ENCODE measurements at regions of chr20 and their contacts with region 1.

Region 1: GRCh38 chr20:37384683-37385174 is 38.8 kb downstream of the SRC start:
- DNase-seq: peak; percentile 85
- ATAC-seq: peak; percentile 71
- H3K4me3 ChIP-seq: peak overlapping the region in 4 of 5 experiments; percentile 49 to 65 (median 57)
- H3K4me3 Mint-ChIP-seq: peak overlapping the region; percentile 92
- H3K27ac ChIP-seq: peak overlapping the region in 1 of 2 donors; percentile 59
- H3K27ac Mint-ChIP-seq: peak overlapping the region; percentile 90
- H3K4me1 ChIP-seq: peaks cover 10 to 42% of the 10 kb centered on the region in 2 donors
- H3K4me1 Mint-ChIP-seq: peaks cover 39% of the 10 kb centered on the region
- H3K27me3 ChIP-seq: no peaks in the 10 kb centered on the region
- H3K27me3 Mint-ChIP-seq: no peaks in the 10 kb centered on the region
- CTCF ChIP-seq: peak; percentile 90

Region 2: GRCh38 chr20:37202267-37202943 is 182.3 kb before region 1 on chr20:
- CTCF ChIA-PET with region 1: interaction called, 6 read pairs
- POLR2A ChIA-PET with region 1: no interaction called
- intact Hi-C with region 1: loop called (anchors 2 kb)
- DNase-seq: peak; percentile 56
- ATAC-seq: peak; percentile 58
- H3K4me3 ChIP-seq: no peak overlapping the region
- H3K4me3 Mint-ChIP-seq: no peak overlapping the region
- H3K27ac ChIP-seq: no peak overlapping the region
- H3K27ac Mint-ChIP-seq: no peak overlapping the region
- H3K4me1 ChIP-seq: no peaks in the 10 kb centered on the region
- H3K4me1 Mint-ChIP-seq: no peaks in the 10 kb centered on the region
- H3K27me3 ChIP-seq: no peaks in the 10 kb centered on the region
- H3K27me3 Mint-ChIP-seq: no peaks in the 10 kb centered on the region
- CTCF ChIP-seq: peak; percentile 85

Region 3: DNA sequence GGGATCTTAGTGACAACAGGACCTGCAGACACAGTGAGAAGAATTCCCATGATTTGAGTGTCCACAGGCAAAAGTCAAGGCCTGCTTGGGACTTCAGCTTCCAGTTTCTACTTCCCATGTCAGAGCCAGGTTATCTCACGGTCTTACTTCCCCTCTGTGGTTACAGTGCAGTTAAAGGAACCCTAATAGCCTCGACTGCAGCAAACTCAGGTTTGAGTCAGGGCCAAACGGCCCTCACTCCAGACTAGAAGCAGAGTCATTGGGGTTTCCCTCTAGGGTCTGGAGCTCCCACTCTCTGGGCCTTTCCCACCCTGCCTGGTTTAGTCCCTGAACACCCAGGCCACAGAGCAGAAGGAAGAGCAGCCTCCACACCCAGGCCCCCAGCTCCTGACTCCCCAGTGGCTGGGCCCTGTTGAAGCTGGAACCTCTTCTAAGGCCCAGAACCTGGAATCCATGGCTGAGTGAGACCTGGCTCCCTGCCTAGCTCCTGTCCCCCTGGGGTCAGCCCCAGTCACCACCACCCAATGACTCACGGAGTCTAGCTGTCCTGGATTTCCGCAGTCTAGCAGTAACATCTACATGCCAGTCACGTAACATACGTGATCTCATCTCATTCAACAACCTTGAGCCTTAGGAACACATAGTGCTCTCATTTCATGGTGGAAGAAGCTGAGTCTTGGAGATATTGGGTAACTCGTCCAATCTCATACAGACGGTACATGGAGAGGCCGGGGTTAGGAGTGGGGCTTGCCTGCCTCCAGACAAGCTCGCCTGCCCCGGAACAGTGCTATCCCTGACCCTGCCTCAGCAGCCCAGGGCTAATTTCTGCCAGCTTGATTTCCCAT is 113.9 kb before region 1 on chr20:
- CTCF ChIA-PET with region 1: interaction called, 67 read pairs
- POLR2A ChIA-PET with region 1: interaction called, 3 read pairs
- intact Hi-C with region 1: loop called (anchors 1 kb)
- DNase-seq: peak; percentile 75
- ATAC-seq: peak; percentile 60
- H3K4me3 ChIP-seq: no peak overlapping the region
- H3K4me3 Mint-ChIP-seq: no peak overlapping the region
- H3K27ac ChIP-seq: peak overlapping the region; percentile 49 to 71
- H3K27ac Mint-ChIP-seq: peak overlapping the region; percentile 57
- H3K4me1 ChIP-seq: peaks cover 42 to 46% of the 10 kb centered on the region in 2 donors
- H3K4me1 Mint-ChIP-seq: peaks cover 43% of the 10 kb centered on the region
- H3K27me3 ChIP-seq: no peaks in the 10 kb centered on the region
- H3K27me3 Mint-ChIP-seq: no peaks in the 10 kb centered on the region
- CTCF ChIP-seq: no peak

Region 4: GRCh38 chr20:37316116-37316774 is 68.5 kb before region 1 on chr20:
- CTCF ChIA-PET with region 1: interaction called, 11 read pairs
- POLR2A ChIA-PET with region 1: interaction called, 3 read pairs
- intact Hi-C with region 1: loop called (anchors 1 kb)
- DNase-seq: peak; percentile 90
- ATAC-seq: peak; percentile 87
- H3K4me3 ChIP-seq: peak overlapping the region in 4 of 5 experiments; percentile 15 to 45 (median 28)
- H3K4me3 Mint-ChIP-seq: peak overlapping the region; percentile 68
- H3K27ac ChIP-seq: peak overlapping the region; percentile 93 to 100
- H3K27ac Mint-ChIP-seq: peak overlapping the region; percentile 92
- H3K4me1 ChIP-seq: peaks cover 38 to 42% of the 10 kb centered on the region in 2 donors
- H3K4me1 Mint-ChIP-seq: peaks cover 56% of the 10 kb centered on the region
- H3K27me3 ChIP-seq: no peaks in the 10 kb centered on the region
- H3K27me3 Mint-ChIP-seq: no peaks in the 10 kb centered on the region
- CTCF ChIP-seq: no peak

Region 5: GRCh38 chr20:37365760-37366638 is 18.7 kb before region 1 on chr20:
- CTCF ChIA-PET with region 1: interaction called, 5 read pairs
- POLR2A ChIA-PET with region 1: interaction called, 6 read pairs
- intact Hi-C with region 1: loop called (anchors 2 kb)
- DNase-seq: peak; percentile 73
- ATAC-seq: peak; percentile 88
- H3K4me3 ChIP-seq: peak overlapping the region in 1 of 5 experiments; percentile 39
- H3K4me3 Mint-ChIP-seq: peak overlapping the region; percentile 32
- H3K27ac ChIP-seq: peak overlapping the region; percentile 64 to 81
- H3K27ac Mint-ChIP-seq: peak overlapping the region; percentile 62
- H3K4me1 ChIP-seq: peaks cover 24 to 35% of the 10 kb centered on the region in 2 donors
- H3K4me1 Mint-ChIP-seq: peaks cover 28% of the 10 kb centered on the region
- H3K27me3 ChIP-seq: no peaks in the 10 kb centered on the region
- H3K27me3 Mint-ChIP-seq: no peaks in the 10 kb centered on the region
- CTCF ChIP-seq: no peak

Region 6: GRCh38 chr20:37534401-37535157 is 149.8 kb after region 1 on chr20:
- CTCF ChIA-PET with region 1: interaction called, 19 read pairs
- POLR2A ChIA-PET with region 1: interaction called, 7 read pairs
- intact Hi-C with region 1: loop called (anchors 1 kb)
- DNase-seq: peak; percentile 91
- ATAC-seq: peak; percentile 98
- H3K4me3 ChIP-seq: no peak overlapping the region
- H3K4me3 Mint-ChIP-seq: no peak overlapping the region
- H3K27ac ChIP-seq: peak overlapping the region; percentile 2 to 71
- H3K27ac Mint-ChIP-seq: peak overlapping the region; percentile 87
- H3K4me1 ChIP-seq: peaks cover 4 to 5% of the 10 kb centered on the region in 2 donors
- H3K4me1 Mint-ChIP-seq: peaks cover 12% of the 10 kb centered on the region
- H3K27me3 ChIP-seq: no peaks in the 10 kb centered on the region
- H3K27me3 Mint-ChIP-seq: peaks cover 12% of the 10 kb centered on the region
- CTCF ChIP-seq: peak; percentile 84

Region 7: GRCh38 chr20:37856932-37857660 is 472.4 kb after region 1 on chr20:
- CTCF ChIA-PET with region 1: no interaction called
- POLR2A ChIA-PET with region 1: no interaction called
- intact Hi-C with region 1: no loop called
- DNase-seq: no peak
- ATAC-seq: no peak
- H3K4me3 ChIP-seq: no peak overlapping the region
- H3K4me3 Mint-ChIP-seq: no peak overlapping the region
- H3K27ac ChIP-seq: no peak overlapping the region
- H3K27ac Mint-ChIP-seq: no peak overlapping the region
- H3K4me1 ChIP-seq: no peaks in the 10 kb centered on the region
- H3K4me1 Mint-ChIP-seq: peaks cover 4% of the 10 kb centered on the region
- H3K27me3 ChIP-seq: no peaks in the 10 kb centered on the region
- H3K27me3 Mint-ChIP-seq: no peaks in the 10 kb centered on the region
- CTCF ChIP-seq: no peak

Region 8: GRCh38 chr20:38065764-38066375 is 681.1 kb after region 1 on chr20:
- CTCF ChIA-PET with region 1: no interaction called
- POLR2A ChIA-PET with region 1: no interaction called
- intact Hi-C with region 1: no loop called
- DNase-seq: no peak
- ATAC-seq: no peak
- H3K4me3 ChIP-seq: no peak overlapping the region
- H3K4me3 Mint-ChIP-seq: peak overlapping the region; percentile 68
- H3K27ac ChIP-seq: no peak overlapping the region
- H3K27ac Mint-ChIP-seq: peak overlapping the region; percentile 62
- H3K4me1 ChIP-seq: peaks cover 0 to 13% of the 10 kb centered on the region in 2 donors
- H3K4me1 Mint-ChIP-seq: peaks cover 26% of the 10 kb centered on the region
- H3K27me3 ChIP-seq: no peaks in the 10 kb centered on the region
- H3K27me3 Mint-ChIP-seq: no peaks in the 10 kb centered on the region
- CTCF ChIP-seq: no peak

Measured in B cell (primary cell).